ENCODE measurements at regions of chrX and their contacts with region 1.

Region 1: DNA sequence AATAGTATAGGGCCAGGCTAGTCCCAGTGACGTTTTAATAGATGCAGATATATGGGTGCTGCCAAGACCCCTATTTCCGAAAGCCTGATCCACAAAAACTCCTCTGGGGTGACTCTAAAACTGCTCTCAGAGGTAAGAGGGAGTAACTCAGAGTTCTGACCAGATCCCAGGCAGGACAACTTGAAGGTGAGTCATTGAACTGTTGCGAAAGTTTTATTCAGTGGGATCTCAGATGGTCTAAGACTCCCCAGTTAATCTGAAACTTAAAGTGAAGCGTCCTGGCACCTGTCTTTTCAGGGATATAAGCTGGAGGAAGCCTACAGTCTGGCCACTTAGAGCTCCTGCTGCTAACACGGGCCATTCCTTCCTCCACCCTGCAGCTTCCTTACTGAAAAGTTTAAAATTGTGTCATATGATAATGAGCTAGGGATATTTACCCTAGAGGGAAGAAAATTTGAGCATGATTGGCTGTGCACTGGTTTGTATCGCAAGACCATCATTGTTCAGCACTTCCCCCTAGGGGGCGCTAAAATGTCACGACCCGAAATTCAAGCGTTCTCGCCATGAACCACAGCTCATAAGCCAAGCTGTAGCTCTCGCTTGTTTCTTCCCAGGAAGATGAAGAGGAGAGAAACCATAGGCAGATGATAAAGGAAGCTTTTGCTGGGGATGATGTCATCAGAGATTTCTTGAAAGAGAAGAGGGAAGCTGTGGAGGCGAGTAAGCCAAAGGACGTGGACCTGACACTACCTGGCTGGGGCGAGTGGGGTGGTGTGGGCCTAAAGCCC is 19.5 kb downstream of the UTP14A start:
- DNase-seq: peak in 4 of 6 donors; percentile 45 to 71 (median 51)
- ATAC-seq: peak; percentile 69 to 89 (median 86)
- H3K4me3 ChIP-seq: no peak overlapping the region
- H3K27ac ChIP-seq: no peak overlapping the region
- H3K4me1 ChIP-seq: no peaks in the 10 kb centered on the region
- H3K27me3 ChIP-seq: no peaks in the 10 kb centered on the region
- CTCF ChIP-seq: peak in 3 of 4 donors; percentile 29 to 54 (median 50)

Region 2: GRCh38 chrX:129701624-129702069 is 223.9 kb before region 1 on chrX:
- intact Hi-C with region 1: no loop called
- DNase-seq: peak in 1 of 6 donors; percentile 7
- ATAC-seq: peak in 2 of 4 donors; percentile 35 to 57
- H3K4me3 ChIP-seq: no peak overlapping the region
- H3K27ac ChIP-seq: no peak overlapping the region
- H3K4me1 ChIP-seq: no peaks in the 10 kb centered on the region
- H3K27me3 ChIP-seq: no peaks in the 10 kb centered on the region
- CTCF ChIP-seq: no peak

Region 3: DNA sequence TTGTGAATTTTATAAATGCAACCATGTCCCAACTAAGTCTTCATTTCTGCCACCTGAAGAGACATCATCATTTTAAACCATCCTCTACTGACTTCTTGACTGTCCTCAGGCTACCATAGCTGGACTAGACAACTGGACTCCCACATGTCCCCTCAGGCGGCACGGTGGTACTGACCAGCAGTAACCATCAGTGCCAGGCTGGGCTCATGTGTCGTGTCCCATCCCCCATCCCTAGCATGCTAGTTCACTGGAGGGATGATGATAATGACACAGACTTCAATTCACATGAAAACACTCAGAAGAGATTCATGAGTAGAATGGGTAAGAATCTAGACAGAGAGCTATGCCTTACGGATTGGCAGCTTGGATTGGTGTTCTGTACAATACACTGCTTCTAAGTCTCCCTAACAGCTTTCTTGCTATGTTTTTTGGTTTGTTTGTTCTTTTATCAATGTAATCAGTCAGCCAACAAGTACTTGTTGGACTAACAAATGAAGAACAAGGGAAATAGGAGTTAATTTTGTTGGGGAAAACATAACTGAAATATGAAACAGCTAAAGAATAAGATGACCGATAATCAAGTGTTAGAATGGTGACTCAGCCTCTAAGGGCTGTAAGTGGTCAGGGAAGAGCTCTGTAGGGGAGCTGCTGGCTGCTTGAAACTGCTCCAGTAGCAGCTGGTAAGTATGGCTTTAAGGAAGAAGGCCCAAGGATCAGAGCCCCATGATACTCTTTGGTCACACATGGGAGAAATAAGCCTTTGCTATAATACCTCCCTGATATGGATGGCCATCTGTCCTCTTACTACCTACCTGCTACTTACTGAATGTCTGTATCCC is 92.1 kb before region 1 on chrX:
- intact Hi-C with region 1: no loop called
- DNase-seq: no peak
- ATAC-seq: no peak
- H3K4me3 ChIP-seq: no peak overlapping the region
- H3K27ac ChIP-seq: no peak overlapping the region
- H3K4me1 ChIP-seq: no peaks in the 10 kb centered on the region
- H3K27me3 ChIP-seq: no peaks in the 10 kb centered on the region
- CTCF ChIP-seq: no peak

Region 4: DNA sequence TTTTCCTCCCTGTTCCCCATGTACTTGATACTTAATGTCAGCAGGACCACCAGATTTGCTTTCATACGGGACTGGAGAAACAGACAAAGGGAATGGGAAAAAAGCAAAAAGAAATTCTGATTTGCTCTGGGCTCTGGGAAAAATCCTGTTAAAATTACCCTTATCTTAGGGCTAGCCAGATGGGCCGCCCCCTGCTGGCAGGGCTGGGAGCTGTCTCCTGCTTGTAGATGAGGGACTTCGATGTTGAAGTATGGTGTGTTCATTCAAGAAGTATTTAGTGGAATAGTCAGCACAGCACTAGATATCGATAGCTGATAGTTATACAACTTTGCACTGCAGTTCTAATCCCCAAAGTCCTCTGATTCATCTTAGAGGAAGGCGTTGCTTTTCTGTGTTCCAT is 102.7 kb after region 1 on chrX:
- intact Hi-C with region 1: loop called in 2 of 3 experiments (anchors 5 to 10 kb)
- DNase-seq: peak; percentile 14 to 80 (median 45)
- ATAC-seq: peak; percentile 53 to 76 (median 60)
- H3K4me3 ChIP-seq: no peak overlapping the region
- H3K27ac ChIP-seq: no peak overlapping the region
- H3K4me1 ChIP-seq: no peaks in the 10 kb centered on the region
- H3K27me3 ChIP-seq: no peaks in the 10 kb centered on the region
- CTCF ChIP-seq: peak; percentile 62 to 74 (median 68)

Region 5: DNA sequence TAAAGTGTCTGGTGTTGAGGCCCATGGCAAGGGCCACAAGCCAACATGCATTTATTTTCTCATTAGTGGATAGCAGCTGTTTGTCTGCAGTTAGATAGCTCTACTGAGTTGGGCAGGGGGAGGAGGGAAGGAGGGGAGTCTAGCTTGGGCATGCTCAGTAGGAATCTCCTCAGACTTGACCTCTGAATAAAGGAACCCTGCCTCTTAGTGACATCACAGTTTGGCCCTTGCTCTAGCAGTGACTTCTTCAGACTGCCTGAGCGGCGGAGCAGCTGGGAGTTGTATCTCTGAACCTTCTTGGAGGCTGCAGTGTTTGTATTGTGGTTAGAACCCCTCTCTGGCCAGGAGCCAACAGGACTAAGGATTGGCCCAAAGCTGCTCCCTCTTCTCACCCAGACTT is 114.3 kb after region 1 on chrX:
- intact Hi-C with region 1: loop called in 1 of 3 experiments (anchors 10 kb)
- DNase-seq: no peak
- ATAC-seq: no peak
- H3K4me3 ChIP-seq: no peak overlapping the region
- H3K27ac ChIP-seq: no peak overlapping the region
- H3K4me1 ChIP-seq: no peaks in the 10 kb centered on the region
- H3K27me3 ChIP-seq: no peaks in the 10 kb centered on the region
- CTCF ChIP-seq: no peak

Measured in pancreas (tissue), 10 donors.